ENCODE measurements at regions of chr9 and their contacts with region 1.

Region 1: GRCh38 chr9:82271106-82271561 is 282.6 kb downstream of the SPATA31D1 start:
- DNase-seq: no peak
- ATAC-seq: no peak
- H3K4me3 ChIP-seq: no peak overlapping the region
- H3K4me3 Mint-ChIP-seq: no peak overlapping the region
- H3K27ac ChIP-seq: no peak overlapping the region
- H3K27ac Mint-ChIP-seq: no peak overlapping the region
- H3K4me1 ChIP-seq: no peaks in the 10 kb centered on the region
- H3K4me1 Mint-ChIP-seq: no peaks in the 10 kb centered on the region
- H3K27me3 ChIP-seq: no peaks in the 10 kb centered on the region
- H3K27me3 Mint-ChIP-seq: no peaks in the 10 kb centered on the region

Region 2: GRCh38 chr9:82168585-82168984 is 102.5 kb before region 1 on chr9:
- CTCF ChIA-PET with region 1: no interaction called
- POLR2A ChIA-PET with region 1: no interaction called
- intact Hi-C with region 1: no loop called
- DNase-seq: no peak
- ATAC-seq: no peak
- H3K4me3 ChIP-seq: no peak overlapping the region
- H3K4me3 Mint-ChIP-seq: no peak overlapping the region
- H3K27ac ChIP-seq: no peak overlapping the region
- H3K27ac Mint-ChIP-seq: no peak overlapping the region
- H3K4me1 ChIP-seq: no peaks in the 10 kb centered on the region
- H3K4me1 Mint-ChIP-seq: no peaks in the 10 kb centered on the region
- H3K27me3 ChIP-seq: no peaks in the 10 kb centered on the region
- H3K27me3 Mint-ChIP-seq: no peaks in the 10 kb centered on the region

Region 3: DNA sequence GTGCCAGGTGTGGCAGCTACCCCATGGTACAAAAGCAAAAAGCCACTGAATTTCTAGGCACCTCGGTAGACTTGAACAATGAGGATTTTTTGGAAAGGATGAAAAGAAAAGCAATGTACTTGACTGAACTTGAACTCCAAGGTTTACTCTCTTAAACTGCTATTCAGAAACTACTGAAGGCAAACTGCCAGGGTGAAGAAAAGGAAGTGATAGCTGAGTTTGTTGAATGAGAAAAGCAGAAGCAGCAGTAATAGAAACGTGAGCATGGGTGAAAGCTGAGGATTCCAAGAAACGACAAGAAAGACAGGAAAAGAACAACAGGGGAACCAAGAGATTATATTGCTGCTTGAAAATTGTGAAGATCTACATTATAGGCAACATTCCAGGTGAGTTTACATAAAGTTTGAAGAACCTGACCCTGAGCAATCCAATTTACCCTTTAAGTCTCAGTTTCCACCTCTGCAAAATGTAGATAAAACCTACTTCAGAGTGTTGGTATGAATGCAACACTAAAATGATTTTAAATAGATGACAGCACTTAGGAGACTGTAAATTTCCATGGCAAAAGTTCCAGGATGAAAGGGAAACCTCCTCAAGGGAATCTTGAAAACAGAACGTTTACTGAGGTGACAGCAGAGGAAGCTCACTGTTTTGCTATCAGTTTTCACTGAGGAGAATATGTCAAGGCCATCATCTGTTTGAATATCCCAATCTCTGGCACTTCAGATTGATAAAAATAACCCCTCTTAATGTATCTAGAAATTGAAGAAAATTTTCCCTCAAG is 36.8 kb before region 1 on chr9:
- CTCF ChIA-PET with region 1: no interaction called
- POLR2A ChIA-PET with region 1: no interaction called
- intact Hi-C with region 1: no loop called
- DNase-seq: no peak
- ATAC-seq: no peak
- H3K4me3 ChIP-seq: no peak overlapping the region
- H3K4me3 Mint-ChIP-seq: no peak overlapping the region
- H3K27ac ChIP-seq: no peak overlapping the region
- H3K27ac Mint-ChIP-seq: no peak overlapping the region
- H3K4me1 ChIP-seq: no peaks in the 10 kb centered on the region
- H3K4me1 Mint-ChIP-seq: no peaks in the 10 kb centered on the region
- H3K27me3 ChIP-seq: no peaks in the 10 kb centered on the region
- H3K27me3 Mint-ChIP-seq: no peaks in the 10 kb centered on the region

Region 4: DNA sequence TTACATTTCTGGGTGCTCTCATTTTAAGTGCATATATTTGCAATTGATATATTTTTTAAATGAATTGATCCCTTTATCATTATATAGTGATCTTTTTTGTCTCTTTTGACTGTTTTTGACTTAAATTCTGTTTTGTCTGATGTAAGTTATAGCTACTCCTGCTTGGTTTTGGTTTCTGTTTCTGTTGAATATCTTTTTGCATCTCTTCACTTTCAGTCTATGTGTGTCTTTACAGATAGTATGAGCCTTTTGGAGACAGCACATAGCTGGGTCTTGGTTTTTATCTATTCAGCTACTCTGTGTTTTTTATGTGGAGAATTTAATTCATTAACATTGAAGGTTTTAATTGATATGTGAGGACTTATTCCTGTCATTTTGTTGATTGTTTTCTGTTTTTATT is 28.7 kb after region 1 on chr9:
- CTCF ChIA-PET with region 1: no interaction called
- POLR2A ChIA-PET with region 1: no interaction called
- intact Hi-C with region 1: loop called in 1 of 2 experiments (anchors 5 kb)
- DNase-seq: no peak
- ATAC-seq: no peak
- H3K4me3 ChIP-seq: no peak overlapping the region
- H3K4me3 Mint-ChIP-seq: no peak overlapping the region
- H3K27ac ChIP-seq: no peak overlapping the region
- H3K27ac Mint-ChIP-seq: no peak overlapping the region
- H3K4me1 ChIP-seq: no peaks in the 10 kb centered on the region
- H3K4me1 Mint-ChIP-seq: no peaks in the 10 kb centered on the region
- H3K27me3 ChIP-seq: no peaks in the 10 kb centered on the region
- H3K27me3 Mint-ChIP-seq: no peaks in the 10 kb centered on the region

Measured in naive thymus-derived CD4-positive, alpha-beta T cell (primary cell).